Activated CD4-positive, alpha-beta T cell treated with anti-CD3 and anti-CD28 coated beads, Interleukin-2, amount 10 ng/mL, durations not matched to agents 24 days and 14 days (primary cell): ENCODE measurements at regions of chr12 and their contacts with region 1.

Region 1: GRCh38 chr12:77049767-77050353 is 15.5 kb downstream of the E2F7 start:
- DNase-seq: peak; percentile 77
- H3K4me3 Mint-ChIP-seq: no peak overlapping the region
- H3K27ac Mint-ChIP-seq: no peak overlapping the region
- H3K4me1 Mint-ChIP-seq: peaks cover 3% of the 10 kb centered on the region
- H3K27me3 Mint-ChIP-seq: no peaks in the 10 kb centered on the region

Region 2: DNA sequence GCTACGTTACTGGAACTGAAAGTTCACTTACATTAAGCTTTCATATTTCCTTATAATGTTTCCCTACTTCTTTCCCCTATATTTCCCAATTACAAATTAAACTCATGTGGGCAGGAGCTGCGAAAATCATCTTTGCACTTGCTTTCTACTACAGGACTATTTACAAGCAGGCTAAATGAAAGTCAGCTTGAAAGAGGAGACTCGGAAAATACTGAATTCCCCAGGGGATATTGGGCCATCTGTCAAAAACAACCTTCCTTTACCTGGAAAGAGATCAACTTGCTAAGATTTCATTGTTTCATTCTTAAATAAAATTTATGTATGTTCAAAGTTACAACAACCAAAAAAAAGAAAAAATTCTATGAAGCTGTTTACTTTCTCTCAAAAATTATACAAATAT is 608.8 kb before region 1 on chr12:
- intact Hi-C with region 1: no loop called
- DNase-seq: no peak
- H3K4me3 Mint-ChIP-seq: no peak overlapping the region
- H3K27ac Mint-ChIP-seq: no peak overlapping the region
- H3K4me1 Mint-ChIP-seq: peaks cover 12% of the 10 kb centered on the region
- H3K27me3 Mint-ChIP-seq: no peaks in the 10 kb centered on the region

Region 3: GRCh38 chr12:77065361-77066204 is 15.7 kb after region 1 on chr12 and contains the start of gene E2F7:
- intact Hi-C with region 1: loop called (anchors 2 kb)
- DNase-seq: peak; percentile 97
- H3K4me3 Mint-ChIP-seq: peak within 1 kb of the TSS; percentile 90
- H3K27ac Mint-ChIP-seq: peak within 1 kb of the TSS; percentile 80
- H3K4me1 Mint-ChIP-seq: peaks cover 34% of the 10 kb centered on the region
- H3K27me3 Mint-ChIP-seq: peaks cover 16% of the 10 kb centered on the region
- total RNA-seq, gene E2F7: 16.8 and 20.0 TPM in 2 replicates